SK-N-SH (cell line): ENCODE measurements at regions of chr2 and their contacts with region 1.

Region 1: DNA sequence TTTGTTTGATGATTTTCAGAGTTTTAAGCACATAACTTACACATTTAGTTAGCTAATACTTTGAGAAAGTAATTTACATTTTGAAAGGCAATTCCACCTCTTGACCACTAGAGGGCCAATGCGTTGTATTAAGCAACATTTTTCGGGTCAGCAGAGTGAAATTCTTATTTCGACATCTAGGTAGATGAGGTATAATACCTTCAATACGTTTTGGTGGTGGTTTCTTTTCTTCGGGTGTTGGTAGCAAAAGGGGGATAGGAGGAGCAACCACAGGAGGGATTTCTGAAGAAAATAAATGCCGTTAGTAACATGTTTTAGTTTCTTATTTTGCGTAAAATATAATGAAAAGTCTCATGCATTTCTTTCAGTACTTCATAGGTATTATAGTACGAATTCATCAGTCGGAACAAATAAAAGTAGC is 106.3 kb downstream of the TTN start:
- DNase-seq: peak; percentile 30
- H3K4me3 ChIP-seq: no peak overlapping the region; a peak in 1 of 4 replicates
- H3K27ac ChIP-seq: no peak overlapping the region
- H3K4me1 ChIP-seq: no peaks in the 10 kb centered on the region
- H3K27me3 ChIP-seq: no peaks in the 10 kb centered on the region
- CTCF ChIP-seq: peak; percentile 93
- EP300 ChIP-seq: no peak
- RAD21 ChIP-seq: peak; percentile 57

Region 2: GRCh38 chr2:178397002-178397605 is 303.8 kb before region 1 on chr2:
- CTCF ChIA-PET with region 1: no interaction called
- POLR2A ChIA-PET with region 1: no interaction called
- DNase-seq: peak; percentile 44
- H3K4me3 ChIP-seq: no peak overlapping the region
- H3K27ac ChIP-seq: no peak overlapping the region
- H3K4me1 ChIP-seq: peaks cover 0 to 3% of the 10 kb centered on the region in 2 experiments; a peak in 1 of 4 replicates
- H3K27me3 ChIP-seq: no peaks in the 10 kb centered on the region
- CTCF ChIP-seq: peak; percentile 78
- EP300 ChIP-seq: no peak
- RAD21 ChIP-seq: peak; percentile 64

Region 3: DNA sequence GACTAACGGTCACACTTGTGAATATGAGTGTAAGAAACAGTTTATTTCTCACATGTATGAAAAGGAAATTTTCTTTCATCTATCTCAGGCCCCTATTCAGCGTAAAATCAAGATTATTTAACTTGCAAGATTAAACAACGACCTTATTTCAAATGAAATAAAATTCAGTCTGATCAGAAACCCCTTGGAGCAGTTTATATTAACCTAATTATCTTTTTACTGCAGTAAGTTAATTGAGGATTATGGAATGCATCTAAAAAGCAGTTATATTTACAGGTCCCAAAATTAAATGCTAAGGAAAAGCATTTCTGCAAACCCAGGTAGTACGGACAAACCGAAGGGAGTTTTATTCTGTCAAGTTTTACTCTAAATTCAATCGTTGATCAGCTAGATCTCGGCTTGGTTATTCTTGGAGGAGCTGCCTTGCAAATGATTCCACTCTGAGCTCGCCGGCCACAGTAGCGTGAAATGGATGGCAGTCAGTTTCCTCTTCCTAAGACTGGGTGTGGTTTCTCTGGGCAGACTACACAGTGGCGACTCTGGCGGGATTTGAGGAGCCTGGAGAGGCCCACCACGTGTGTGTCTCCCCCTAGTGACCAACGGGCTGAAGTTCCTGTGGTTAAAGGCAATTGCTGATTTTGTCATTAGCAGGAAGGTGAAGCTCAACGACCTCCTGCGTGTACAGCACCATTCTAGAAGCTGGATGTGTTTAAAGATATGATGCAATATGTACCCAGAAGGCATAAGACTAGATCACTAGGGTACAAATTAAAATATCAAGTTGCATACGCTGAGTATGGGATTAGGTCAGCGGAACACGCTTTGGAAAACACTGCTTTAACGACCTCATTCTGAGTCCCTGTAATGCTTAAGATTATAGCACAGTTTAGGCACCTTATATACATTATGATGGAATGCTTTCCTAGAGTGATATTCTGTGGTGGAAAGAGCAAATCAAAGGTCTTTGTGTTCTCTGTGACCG is 286.4 kb before region 1 on chr2:
- CTCF ChIA-PET with region 1: no interaction called
- POLR2A ChIA-PET with region 1: no interaction called
- DNase-seq: peak; percentile 79
- H3K4me3 ChIP-seq: peak overlapping the region; percentile 55 to 75
- H3K27ac ChIP-seq: peak overlapping the region; percentile 89 to 96
- H3K4me1 ChIP-seq: peaks cover 3 to 6% of the 10 kb centered on the region in 2 experiments; a peak in 3 of 4 replicates
- H3K27me3 ChIP-seq: no peaks in the 10 kb centered on the region
- CTCF ChIP-seq: peak; percentile 94
- EP300 ChIP-seq: no peak
- RAD21 ChIP-seq: peak; percentile 85

Region 4: DNA sequence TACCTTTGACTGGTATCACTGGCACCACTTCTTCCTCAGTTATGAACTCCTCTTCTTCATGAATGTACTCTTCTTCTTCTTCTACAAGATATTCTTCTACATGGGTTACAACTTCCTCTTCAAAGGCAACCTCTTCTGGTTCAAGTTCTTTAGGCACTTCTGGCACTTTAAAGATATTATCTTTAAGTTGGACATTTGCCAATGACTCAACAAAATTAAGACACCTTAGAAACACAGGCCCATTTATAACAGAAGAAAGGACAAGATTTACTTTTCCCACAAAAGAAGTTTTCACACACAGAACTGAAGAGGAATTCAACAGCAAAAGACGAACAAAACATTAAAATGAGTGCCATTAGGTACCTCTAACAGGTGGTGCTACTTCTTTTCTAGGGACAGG is 21.0 kb before region 1 on chr2:
- CTCF ChIA-PET with region 1: interaction called, 11 read pairs
- POLR2A ChIA-PET with region 1: no interaction called
- DNase-seq: no peak
- H3K4me3 ChIP-seq: no peak overlapping the region
- H3K27ac ChIP-seq: no peak overlapping the region
- H3K4me1 ChIP-seq: no peaks in the 10 kb centered on the region
- H3K27me3 ChIP-seq: no peaks in the 10 kb centered on the region
- CTCF ChIP-seq: no peak
- EP300 ChIP-seq: no peak
- RAD21 ChIP-seq: no peak

Region 5: DNA sequence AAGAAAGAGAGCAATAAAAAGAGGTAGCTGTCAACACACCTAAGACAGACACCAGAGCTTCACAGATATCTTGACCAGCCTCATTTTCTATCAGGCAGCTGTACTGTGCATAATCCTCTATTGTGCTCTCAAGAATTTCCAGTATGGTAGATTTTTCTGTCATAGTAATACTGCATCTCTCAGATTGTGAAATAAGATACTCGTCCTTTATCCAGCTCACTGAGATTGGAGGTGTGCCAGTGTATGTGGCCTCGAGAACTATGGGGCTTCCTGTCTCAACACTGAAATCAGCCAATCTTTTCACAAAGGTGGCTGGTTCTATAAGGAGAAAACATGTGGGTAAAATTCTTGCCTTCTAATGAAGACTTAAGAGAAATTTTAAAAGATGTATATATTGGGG is 17.4 kb after region 1 on chr2:
- CTCF ChIA-PET with region 1: interaction called, 27 read pairs
- POLR2A ChIA-PET with region 1: no interaction called
- DNase-seq: no peak
- H3K4me3 ChIP-seq: no peak overlapping the region
- H3K27ac ChIP-seq: no peak overlapping the region
- H3K4me1 ChIP-seq: peaks cover 0 to 15% of the 10 kb centered on the region in 2 experiments; a peak in 2 of 4 replicates
- H3K27me3 ChIP-seq: no peaks in the 10 kb centered on the region
- CTCF ChIP-seq: no peak
- EP300 ChIP-seq: no peak
- RAD21 ChIP-seq: no peak

Region 6: GRCh38 chr2:178804791-178805190 is 103.9 kb after region 1 on chr2:
- CTCF ChIA-PET with region 1: no interaction called
- POLR2A ChIA-PET with region 1: no interaction called
- DNase-seq: peak; percentile 37
- H3K4me3 ChIP-seq: no peak overlapping the region
- H3K27ac ChIP-seq: no peak overlapping the region
- H3K4me1 ChIP-seq: no peaks in the 10 kb centered on the region; a peak in 2 of 4 replicates
- H3K27me3 ChIP-seq: no peaks in the 10 kb centered on the region
- CTCF ChIP-seq: peak; percentile 56
- EP300 ChIP-seq: no peak
- RAD21 ChIP-seq: no peak

Region 7: GRCh38 chr2:179963626-179964025 is 1262.7 kb after region 1 on chr2:
- CTCF ChIA-PET with region 1: no interaction called
- POLR2A ChIA-PET with region 1: no interaction called
- DNase-seq: no peak
- H3K4me3 ChIP-seq: no peak overlapping the region
- H3K27ac ChIP-seq: peak overlapping the region in 1 of 2 experiments; percentile 62; a peak in 2 of 4 replicates
- H3K4me1 ChIP-seq: no peaks in the 10 kb centered on the region
- H3K27me3 ChIP-seq: no peaks in the 10 kb centered on the region
- CTCF ChIP-seq: no peak
- EP300 ChIP-seq: no peak
- RAD21 ChIP-seq: no peak